Mammary epithelial cell (primary cell): ENCODE measurements at regions of chr4 and their contacts with region 1.

Region 1: GRCh38 chr4:79917246-79917645 is 155.8 kb downstream of the ANTXR2 start:
- DNase-seq: peak; percentile 32
- H3K4me3 ChIP-seq: no peak overlapping the region
- H3K27ac ChIP-seq: no peak overlapping the region
- H3K4me1 ChIP-seq: peaks cover 7% of the 10 kb centered on the region
- H3K27me3 ChIP-seq: no peaks in the 10 kb centered on the region
- CTCF ChIP-seq: peak; percentile 57 to 86

Region 2: GRCh38 chr4:80033581-80033980 is 116.3 kb after region 1 on chr4:
- CTCF ChIA-PET with region 1: no interaction called
- dilution Hi-C with region 1: no loop called
- in situ Hi-C with region 1: no loop called
- intact Hi-C with region 1: loop called (anchors 5 kb)
- DNase-seq: no peak
- H3K4me3 ChIP-seq: no peak overlapping the region
- H3K27ac ChIP-seq: no peak overlapping the region
- H3K4me1 ChIP-seq: peaks cover 7% of the 10 kb centered on the region
- H3K27me3 ChIP-seq: no peaks in the 10 kb centered on the region
- CTCF ChIP-seq: peak in 1 of 2 donors; percentile 12

Region 3: GRCh38 chr4:80215449-80216052 is 298.3 kb after region 1 on chr4:
- CTCF ChIA-PET with region 1: no interaction called
- dilution Hi-C with region 1: no loop called
- in situ Hi-C with region 1: loop called in 1 of 2 experiments (anchors 25 kb)
- intact Hi-C with region 1: loop called (anchors 1 kb)
- DNase-seq: no peak
- H3K4me3 ChIP-seq: no peak overlapping the region
- H3K27ac ChIP-seq: no peak overlapping the region
- H3K4me1 ChIP-seq: peaks cover 16% of the 10 kb centered on the region
- H3K27me3 ChIP-seq: no peaks in the 10 kb centered on the region
- CTCF ChIP-seq: peak; percentile 60 to 61

Region 4: DNA sequence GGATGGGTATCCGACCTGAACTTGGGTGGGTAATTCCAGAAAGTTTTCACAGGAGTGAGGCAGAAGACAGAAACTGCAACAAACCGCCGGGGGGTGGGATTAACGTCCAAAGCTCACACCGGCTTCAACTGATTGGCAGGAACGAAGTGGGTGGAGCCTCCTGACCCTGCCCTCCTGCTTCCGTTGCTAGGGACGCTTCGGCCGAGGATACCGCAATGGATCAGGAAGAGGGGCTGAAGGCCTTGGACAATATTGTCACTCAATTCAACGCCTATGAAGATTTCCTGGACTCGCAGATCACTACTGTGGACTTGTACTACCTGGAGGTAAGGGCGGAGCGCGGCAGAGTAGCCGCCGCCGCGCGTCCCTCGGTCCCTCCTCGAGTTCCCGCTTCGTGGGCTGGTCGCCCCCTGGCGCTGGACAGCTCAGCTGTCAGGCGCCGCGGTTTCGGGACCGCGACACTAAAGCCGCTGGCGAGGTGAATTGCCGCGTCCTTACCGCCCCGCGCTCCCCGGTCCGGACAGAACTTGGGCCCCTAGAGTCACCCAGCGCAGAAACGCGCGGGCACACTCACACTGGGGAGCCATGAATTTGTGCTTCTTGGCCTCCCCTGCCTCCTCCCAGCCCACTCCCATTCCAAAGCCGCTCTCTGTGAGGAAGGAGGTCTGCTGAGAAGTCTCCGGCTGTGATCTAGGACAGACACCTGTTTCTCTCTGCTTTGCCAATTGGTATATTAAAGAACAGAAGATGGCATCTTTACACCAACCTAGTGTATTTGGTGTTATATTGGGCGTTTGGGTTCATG is 418.5 kb after region 1 on chr4 and contains the start of gene CFAP299:
- CTCF ChIA-PET with region 1: no interaction called
- dilution Hi-C with region 1: no loop called
- in situ Hi-C with region 1: no loop called
- intact Hi-C with region 1: loop called (anchors 5 kb)
- DNase-seq: peak; percentile 90
- H3K4me3 ChIP-seq: peak within 1 kb of the TSS; percentile 61 to 78 (median 72)
- H3K27ac ChIP-seq: peak within 1 kb of the TSS; percentile 29
- H3K4me1 ChIP-seq: peaks cover 11% of the 10 kb centered on the region
- H3K27me3 ChIP-seq: no peaks in the 10 kb centered on the region
- CTCF ChIP-seq: peak; percentile 3 to 50
- total RNA-seq, gene CFAP299: not detected